Mammary epithelial cell (primary cell): ENCODE measurements at regions of chr2 and their contacts with region 1.

Region 1: GRCh38 chr2:31384351-31384750 is 30.2 kb downstream of the XDH start:
- DNase-seq: peak; percentile 95
- H3K4me3 ChIP-seq: no peak overlapping the region
- H3K27ac ChIP-seq: peak overlapping the region; percentile 99
- H3K4me1 ChIP-seq: peaks cover 49% of the 10 kb centered on the region
- H3K27me3 ChIP-seq: no peaks in the 10 kb centered on the region
- CTCF ChIP-seq: no peak

Region 2: GRCh38 chr2:31401580-31401979 is 17.2 kb after region 1 on chr2:
- CTCF ChIA-PET with region 1: interaction called, 5 read pairs
- dilution Hi-C with region 1: no loop called
- in situ Hi-C with region 1: no loop called
- intact Hi-C with region 1: loop called (anchors 2 kb)
- DNase-seq: peak; percentile 100
- H3K4me3 ChIP-seq: no peak overlapping the region
- H3K27ac ChIP-seq: peak overlapping the region; percentile 84
- H3K4me1 ChIP-seq: peaks cover 40% of the 10 kb centered on the region
- H3K27me3 ChIP-seq: no peaks in the 10 kb centered on the region
- CTCF ChIP-seq: no peak

Region 3: GRCh38 chr2:31413030-31413429 is 28.7 kb after region 1 on chr2:
- CTCF ChIA-PET with region 1: no interaction called
- dilution Hi-C with region 1: no loop called
- in situ Hi-C with region 1: no loop called
- intact Hi-C with region 1: no loop called
- DNase-seq: no peak
- H3K4me3 ChIP-seq: peak overlapping the region; percentile 22 to 53 (median 38)
- H3K27ac ChIP-seq: no peak overlapping the region
- H3K4me1 ChIP-seq: peaks cover 37% of the 10 kb centered on the region
- H3K27me3 ChIP-seq: no peaks in the 10 kb centered on the region
- CTCF ChIP-seq: no peak